PC-3 (cell line): ENCODE measurements at regions of chr9 and their contacts with region 1.

Region 1: GRCh38 chr9:111450124-111450523 is 34.1 kb downstream of the ECPAS start:
- DNase-seq: no peak
- ATAC-seq: no peak
- H3K4me3 ChIP-seq: no peak overlapping the region
- H3K27ac ChIP-seq: no peak overlapping the region
- H3K4me1 ChIP-seq: no peaks in the 10 kb centered on the region
- H3K27me3 ChIP-seq: no peaks in the 10 kb centered on the region
- CTCF ChIP-seq: no peak

Region 2: DNA sequence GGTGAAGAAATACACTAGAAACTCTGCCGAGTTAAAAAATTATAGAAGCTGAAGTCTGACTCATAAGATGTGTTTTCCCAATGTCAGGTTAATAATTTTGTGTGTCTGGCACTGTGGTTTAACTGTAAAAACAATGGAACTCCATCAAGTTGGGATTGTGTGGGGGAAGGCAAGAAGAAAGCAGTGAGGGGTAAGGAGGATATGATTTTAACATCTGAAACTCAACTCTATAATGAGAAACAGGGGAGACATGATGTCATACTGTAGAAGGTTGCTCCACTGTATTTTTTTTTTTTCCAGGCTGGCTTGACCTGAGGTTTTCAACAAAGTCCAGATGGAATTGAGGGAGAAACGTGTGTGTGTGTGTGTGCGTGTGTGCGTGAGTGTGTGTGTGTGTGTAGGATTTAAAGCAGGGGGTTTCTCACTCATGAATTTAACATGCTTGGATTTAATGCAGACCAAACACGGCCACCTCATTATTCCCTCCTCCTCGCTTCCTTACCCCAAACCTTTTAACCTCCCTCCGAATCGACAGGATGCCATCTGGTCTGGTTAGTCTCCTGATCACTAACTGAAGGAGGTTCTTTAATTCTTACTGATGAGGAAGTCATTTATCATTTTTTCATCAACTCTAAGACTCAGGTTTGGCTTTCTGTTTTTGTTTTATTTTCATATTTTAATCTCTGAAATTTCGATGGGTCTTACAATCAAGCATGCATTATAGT is 271.6 kb before region 1 on chr9:
- CTCF ChIA-PET with region 1: no interaction called
- POLR2A ChIA-PET with region 1: no interaction called
- intact Hi-C with region 1: no loop called
- DNase-seq: no peak
- ATAC-seq: no peak
- H3K4me3 ChIP-seq: no peak overlapping the region
- H3K27ac ChIP-seq: no peak overlapping the region
- H3K4me1 ChIP-seq: no peaks in the 10 kb centered on the region
- H3K27me3 ChIP-seq: no peaks in the 10 kb centered on the region
- CTCF ChIP-seq: no peak

Region 3: GRCh38 chr9:112680731-112681402 is 1230.7 kb after region 1 on chr9:
- CTCF ChIA-PET with region 1: no interaction called
- POLR2A ChIA-PET with region 1: interaction called, 12 read pairs
- intact Hi-C with region 1: no loop called
- DNase-seq: no peak
- ATAC-seq: no peak
- H3K4me3 ChIP-seq: no peak overlapping the region
- H3K27ac ChIP-seq: no peak overlapping the region
- H3K4me1 ChIP-seq: no peaks in the 10 kb centered on the region
- H3K27me3 ChIP-seq: no peaks in the 10 kb centered on the region
- CTCF ChIP-seq: no peak